Sciatic nerve (tissue), 2 donors: ENCODE measurements at regions of chr22 and their contacts with region 1.

Region 1: DNA sequence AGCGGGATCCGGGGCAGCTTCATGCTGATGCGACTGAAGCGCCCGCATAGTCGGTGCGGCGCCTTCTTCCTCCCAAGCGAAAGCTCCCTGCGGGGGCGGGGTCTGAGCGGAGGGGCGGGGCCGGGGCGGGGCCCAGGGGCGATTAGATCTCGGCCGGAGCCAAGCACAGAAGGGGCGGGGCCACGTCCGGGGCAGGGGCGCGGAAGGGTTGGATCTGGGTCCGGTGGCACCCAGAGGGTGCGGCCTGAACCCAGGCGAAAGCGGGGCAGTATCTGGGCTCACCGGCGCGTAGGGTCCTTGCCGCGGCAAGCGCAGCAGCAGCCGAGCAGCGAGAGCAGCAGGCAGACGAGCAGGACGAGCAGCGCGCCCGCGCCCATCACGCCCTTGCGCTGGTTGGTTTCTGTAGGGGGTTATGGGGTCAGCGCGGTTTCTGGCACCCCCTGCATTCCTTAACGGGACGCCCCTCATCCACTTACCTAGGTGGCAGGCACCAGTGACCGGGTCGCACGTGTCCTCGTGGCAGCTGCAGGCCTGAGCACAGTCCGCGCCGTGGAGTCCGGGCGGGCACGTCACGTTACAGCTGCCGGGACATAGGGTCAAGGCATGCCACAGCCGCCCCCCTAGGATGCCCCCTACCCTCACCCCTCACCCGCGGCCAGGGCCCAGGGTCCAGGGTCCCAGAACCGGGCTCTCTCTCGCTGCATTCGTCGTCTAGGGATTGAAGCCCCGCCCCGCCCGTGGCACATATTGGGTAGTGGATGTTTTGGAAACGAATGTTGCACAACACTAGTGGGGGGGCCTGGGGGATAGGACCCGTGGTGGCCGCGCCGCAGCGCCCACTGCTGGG is 8.1 kb downstream of the SCARF2 start:
- DNase-seq: peak; percentile 80
- ATAC-seq: peak; percentile 40

Region 2: DNA sequence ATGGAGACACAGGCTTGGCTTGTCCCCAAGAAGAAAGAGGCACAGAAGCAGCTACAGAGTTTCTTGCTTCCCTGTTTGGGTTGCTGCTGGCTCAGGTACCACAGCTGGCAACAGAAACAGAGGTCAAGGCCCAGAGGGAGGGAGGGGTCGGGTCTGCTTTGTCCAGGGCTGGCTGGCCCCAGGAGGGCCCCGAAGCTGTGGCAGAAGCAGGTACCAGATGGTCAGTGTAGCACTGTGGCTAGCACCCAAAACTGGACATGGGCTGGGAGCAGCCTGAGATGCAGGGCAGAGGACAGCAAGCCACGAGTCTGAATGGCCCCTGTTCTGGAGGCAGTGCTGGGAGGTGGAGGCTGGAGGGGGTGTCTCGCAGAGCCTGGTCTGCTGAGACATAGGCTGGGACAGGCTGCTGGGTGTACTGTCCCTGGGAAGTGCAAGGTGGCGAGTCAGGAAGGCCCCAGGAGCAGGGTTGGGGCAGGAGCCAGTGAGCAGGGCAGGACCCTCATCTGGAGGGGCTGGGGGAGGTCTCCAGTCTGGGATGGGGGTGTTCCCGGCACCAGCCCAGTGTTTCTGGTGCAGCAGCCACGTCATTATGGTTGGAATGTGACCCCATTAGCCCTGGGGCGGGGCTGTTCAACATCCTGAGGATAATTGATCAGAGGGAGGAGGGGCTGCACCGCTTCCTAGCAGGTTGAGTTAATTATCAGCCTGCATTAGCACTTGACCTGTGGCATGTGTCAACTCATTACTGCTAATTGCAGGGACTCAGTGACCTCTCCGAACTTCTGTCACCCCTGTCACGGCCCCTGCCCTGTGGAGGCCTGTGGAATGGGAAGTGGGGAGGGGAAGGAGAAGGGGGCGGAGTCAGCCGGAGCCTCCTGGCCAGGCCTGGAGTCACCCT is 226.1 kb before region 1 on chr22:
- intact Hi-C with region 1: no loop called
- DNase-seq: no peak
- ATAC-seq: no peak

Region 3: GRCh38 chr22:20495861-20496681 is 66.6 kb after region 1 on chr22:
- intact Hi-C with region 1: loop called (anchors 10 kb)
- DNase-seq: peak; percentile 95
- ATAC-seq: peak; percentile 96

Region 4: GRCh38 chr22:20571531-20572007 is 142.1 kb after region 1 on chr22:
- intact Hi-C with region 1: loop called (anchors 10 kb)
- DNase-seq: no peak
- ATAC-seq: no peak